ENCODE measurements at regions of chr15 and their contacts with region 1.

Region 1: DNA sequence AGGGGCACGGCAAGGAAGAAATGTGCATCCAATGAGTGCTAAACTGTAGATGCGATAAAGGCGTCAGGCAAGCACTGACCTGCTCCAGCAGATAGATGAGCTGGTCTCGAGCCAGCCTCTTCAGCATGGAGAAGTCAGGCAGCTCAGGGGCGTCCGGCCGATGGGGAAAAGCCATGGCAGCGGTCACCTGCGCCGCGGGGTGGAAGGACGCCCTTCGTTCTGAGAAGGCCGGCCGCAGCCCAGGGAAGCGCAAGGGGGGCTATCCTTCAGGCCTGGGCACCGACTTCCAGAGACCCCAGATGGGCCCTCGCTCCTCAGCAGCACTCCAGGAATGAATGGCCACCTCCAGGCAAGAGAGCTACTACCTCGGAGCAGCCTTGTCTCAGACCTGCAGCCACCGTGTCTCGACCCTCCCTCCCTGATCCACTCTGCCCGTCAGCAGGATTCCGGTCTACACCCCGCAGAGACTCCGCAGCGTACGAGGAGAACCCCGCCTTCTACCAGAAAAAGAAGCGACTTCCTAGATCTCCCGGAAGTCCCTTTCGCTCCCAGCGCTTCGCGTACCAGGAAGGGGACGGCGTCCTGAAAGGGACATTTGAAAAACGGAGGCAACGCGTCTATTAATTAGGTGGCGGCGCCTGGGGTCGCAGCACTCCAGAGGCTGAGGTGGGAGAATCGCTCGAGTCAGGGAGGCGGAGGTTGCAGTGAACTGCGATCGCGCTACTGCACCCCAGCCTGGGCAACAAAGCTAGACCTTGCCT is at the start of gene VPS33B:
- DNase-seq: peak; percentile 85
- H3K4me3 ChIP-seq: peak within 1 kb of the TSS; percentile 67 to 93 (median 70)
- H3K27ac ChIP-seq: peak within 1 kb of the TSS; percentile 14
- H3K4me1 ChIP-seq: peaks cover 14% of the 10 kb centered on the region
- H3K27me3 ChIP-seq: no peaks in the 10 kb centered on the region
- CTCF ChIP-seq: no peak
- POLR2A ChIP-seq: peak; percentile 52
- total RNA-seq, gene VPS33B: 14.2 and 14.7 TPM in 2 replicates

Region 2: DNA sequence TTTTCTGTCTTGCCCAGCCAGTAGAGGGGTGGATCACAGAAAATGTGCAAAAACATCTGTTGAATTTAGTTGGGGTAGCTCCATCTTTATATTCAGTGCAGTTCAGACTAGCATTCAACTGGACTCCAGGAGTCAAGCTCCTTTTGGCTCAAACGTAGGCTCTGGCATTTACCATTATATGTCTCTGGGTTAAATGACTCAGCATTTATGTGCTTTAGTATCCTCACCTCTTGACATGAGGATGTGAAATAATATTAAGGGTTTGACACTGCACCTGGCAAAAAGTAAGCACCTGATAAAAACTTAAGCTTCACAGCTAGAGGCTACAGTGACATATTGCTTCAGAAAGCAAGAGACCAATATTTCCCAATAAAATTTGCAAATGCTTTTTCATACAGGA is 42.7 kb before region 1 on chr15:
- CTCF ChIA-PET with region 1: no interaction called
- POLR2A ChIA-PET with region 1: no interaction called
- dilution Hi-C with region 1: no loop called
- intact Hi-C with region 1: no loop called
- DNase-seq: no peak
- H3K4me3 ChIP-seq: no peak overlapping the region
- H3K27ac ChIP-seq: no peak overlapping the region
- H3K4me1 ChIP-seq: no peaks in the 10 kb centered on the region
- H3K27me3 ChIP-seq: no peaks in the 10 kb centered on the region
- CTCF ChIP-seq: no peak
- POLR2A ChIP-seq: no peak

Region 3: GRCh38 chr15:90994417-90995311 is 27.6 kb before region 1 on chr15 and contains the start of gene PRC1:
- CTCF ChIA-PET with region 1: no interaction called
- POLR2A ChIA-PET with region 1: no interaction called
- dilution Hi-C with region 1: no loop called
- intact Hi-C with region 1: loop called (anchors 1 kb)
- DNase-seq: peak; percentile 99
- H3K4me3 ChIP-seq: peak within 1 kb of the TSS; percentile 71 to 98 (median 93)
- H3K27ac ChIP-seq: peak within 1 kb of the TSS; percentile 94
- H3K4me1 ChIP-seq: peaks cover 20% of the 10 kb centered on the region
- H3K27me3 ChIP-seq: no peaks in the 10 kb centered on the region
- CTCF ChIP-seq: no peak
- POLR2A ChIP-seq: peak; percentile 42
- total RNA-seq, gene PRC1: 171 and 185 TPM in 2 replicates

Region 4: DNA sequence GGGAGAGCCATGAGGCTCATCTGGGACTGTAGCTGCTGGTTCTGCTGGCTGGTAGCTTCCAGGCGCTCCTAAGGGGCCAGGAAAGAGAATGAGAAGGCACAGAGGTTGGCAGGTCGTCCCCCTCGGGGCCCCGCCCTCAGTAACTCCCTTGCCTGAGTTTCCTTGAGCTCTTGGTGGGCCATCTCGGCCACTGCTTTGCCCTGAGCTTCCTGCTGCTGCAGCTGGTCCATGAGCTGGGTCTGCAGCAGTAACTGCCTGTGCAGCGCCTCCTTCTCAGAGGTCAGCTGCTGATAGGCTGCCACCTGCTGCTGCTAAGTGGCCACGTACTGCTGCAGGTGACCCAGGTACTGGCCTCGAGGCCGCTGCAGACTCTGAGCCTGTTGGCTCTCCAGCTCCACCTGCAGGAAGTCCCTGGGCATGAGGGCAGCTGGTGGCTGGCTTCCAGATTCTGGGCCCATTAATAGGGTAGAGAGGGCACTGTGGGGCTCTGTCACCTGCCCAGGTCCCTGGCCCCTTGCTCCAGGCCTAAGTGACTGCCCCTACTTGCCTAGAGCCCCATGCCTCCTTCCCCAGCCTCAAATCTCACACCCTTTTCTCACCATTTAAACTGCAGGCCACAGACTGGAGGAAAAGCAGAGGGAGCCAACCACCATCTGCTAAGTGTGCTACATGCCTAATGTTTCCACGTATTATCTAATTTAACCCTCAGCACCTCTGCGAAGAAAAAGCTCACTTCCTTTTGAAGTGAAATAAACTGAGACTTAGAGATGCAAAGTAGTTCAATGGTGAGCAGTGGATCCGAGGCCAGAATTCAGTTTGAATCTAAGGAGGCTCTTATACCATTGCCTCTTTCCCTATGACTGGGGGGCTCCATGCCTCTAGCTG is 10.9 kb after region 1 on chr15:
- CTCF ChIA-PET with region 1: interaction called, 17 read pairs
- POLR2A ChIA-PET with region 1: no interaction called
- dilution Hi-C with region 1: no loop called
- intact Hi-C with region 1: no loop called
- DNase-seq: peak; percentile 29
- H3K4me3 ChIP-seq: no peak overlapping the region
- H3K27ac ChIP-seq: no peak overlapping the region
- H3K4me1 ChIP-seq: no peaks in the 10 kb centered on the region
- H3K27me3 ChIP-seq: peaks cover 0 to 4% of the 10 kb centered on the region in 2 experiments
- CTCF ChIP-seq: peak; percentile 42 to 76
- POLR2A ChIP-seq: no peak

Region 5: DNA sequence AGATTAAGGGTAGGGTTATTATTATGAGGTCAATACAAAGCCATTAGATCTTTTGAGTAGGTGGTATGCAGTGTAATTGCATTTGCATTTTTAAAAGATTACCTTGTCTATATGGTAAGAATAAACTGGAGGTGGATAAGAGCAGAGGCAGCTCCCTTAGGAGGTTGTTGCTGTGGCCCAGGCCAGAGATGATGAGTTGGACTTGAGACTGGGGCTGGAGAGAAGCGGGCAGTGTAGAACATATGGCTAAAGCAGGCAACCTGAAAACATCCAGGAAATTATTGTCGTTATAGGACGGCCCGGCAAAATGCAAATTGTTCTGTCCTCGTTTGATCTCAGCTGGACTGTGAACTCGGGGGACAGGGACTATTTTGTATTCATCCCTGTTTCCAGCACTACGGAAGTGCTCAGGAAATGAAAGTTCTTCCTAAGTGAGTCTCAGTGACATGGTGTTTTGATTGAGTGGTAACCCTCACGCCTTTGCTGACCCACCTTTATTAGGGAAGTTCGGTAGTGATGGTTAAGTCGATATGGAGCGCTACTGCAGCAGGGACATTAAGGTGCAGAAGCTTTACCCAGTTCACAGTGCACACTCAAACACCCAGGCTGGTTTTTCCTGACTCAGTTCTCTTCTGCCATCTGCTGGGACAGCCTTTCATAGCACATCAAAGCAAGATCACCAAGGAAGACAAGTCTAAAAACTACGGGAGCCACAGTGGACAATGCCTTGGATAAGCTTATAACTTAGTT is 27.3 kb after region 1 on chr15:
- CTCF ChIA-PET with region 1: interaction called, 10 read pairs
- POLR2A ChIA-PET with region 1: no interaction called
- dilution Hi-C with region 1: no loop called
- intact Hi-C with region 1: no loop called
- DNase-seq: peak; percentile 66
- H3K4me3 ChIP-seq: no peak overlapping the region
- H3K27ac ChIP-seq: no peak overlapping the region
- H3K4me1 ChIP-seq: no peaks in the 10 kb centered on the region
- H3K27me3 ChIP-seq: peaks cover 9 to 11% of the 10 kb centered on the region in 2 experiments
- CTCF ChIP-seq: peak; percentile 26 to 62
- POLR2A ChIP-seq: no peak